GM18951 (cell line): ENCODE measurements at regions of chr17 and their contacts with region 1.

Region 1: DNA sequence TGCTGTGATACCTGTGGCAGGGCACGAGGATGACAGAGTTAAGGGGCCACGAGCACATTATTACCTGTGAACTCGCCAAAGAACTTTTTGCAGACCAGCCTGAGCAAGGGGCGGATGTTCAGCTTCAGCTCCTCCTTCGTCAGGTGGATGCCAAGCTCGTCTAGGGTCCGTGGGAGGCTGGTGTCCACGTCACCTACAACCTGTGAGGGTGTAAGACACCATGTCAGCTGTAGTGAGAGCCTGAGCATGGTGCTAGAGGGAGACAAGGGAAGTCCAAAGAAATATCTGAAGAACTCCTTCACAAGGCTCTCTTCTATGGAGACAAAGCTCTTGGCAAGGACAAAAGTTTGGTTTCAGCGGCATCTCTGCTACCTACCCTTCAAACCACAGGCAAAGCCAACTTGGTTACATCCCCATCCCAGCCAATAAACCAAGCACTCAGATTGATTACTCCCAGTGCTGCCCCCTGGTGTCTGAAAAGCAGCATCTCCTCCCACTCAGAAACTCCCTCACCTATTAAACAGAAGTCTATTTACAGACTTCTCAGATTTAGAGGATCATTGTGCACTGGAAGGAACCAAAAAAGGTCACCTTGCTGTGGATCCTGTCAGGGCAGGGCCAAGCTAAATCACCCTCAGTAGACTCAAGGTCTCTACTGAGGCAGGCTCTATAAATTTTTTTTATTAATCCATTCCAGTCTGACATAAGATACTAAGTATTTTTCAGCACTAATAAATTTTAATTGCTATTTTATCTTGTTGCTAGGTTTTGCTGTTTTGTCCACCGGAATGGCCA is 17.4 kb downstream of the HIGD1B start:
- POLR2A ChIP-seq: no peak

Region 2: DNA sequence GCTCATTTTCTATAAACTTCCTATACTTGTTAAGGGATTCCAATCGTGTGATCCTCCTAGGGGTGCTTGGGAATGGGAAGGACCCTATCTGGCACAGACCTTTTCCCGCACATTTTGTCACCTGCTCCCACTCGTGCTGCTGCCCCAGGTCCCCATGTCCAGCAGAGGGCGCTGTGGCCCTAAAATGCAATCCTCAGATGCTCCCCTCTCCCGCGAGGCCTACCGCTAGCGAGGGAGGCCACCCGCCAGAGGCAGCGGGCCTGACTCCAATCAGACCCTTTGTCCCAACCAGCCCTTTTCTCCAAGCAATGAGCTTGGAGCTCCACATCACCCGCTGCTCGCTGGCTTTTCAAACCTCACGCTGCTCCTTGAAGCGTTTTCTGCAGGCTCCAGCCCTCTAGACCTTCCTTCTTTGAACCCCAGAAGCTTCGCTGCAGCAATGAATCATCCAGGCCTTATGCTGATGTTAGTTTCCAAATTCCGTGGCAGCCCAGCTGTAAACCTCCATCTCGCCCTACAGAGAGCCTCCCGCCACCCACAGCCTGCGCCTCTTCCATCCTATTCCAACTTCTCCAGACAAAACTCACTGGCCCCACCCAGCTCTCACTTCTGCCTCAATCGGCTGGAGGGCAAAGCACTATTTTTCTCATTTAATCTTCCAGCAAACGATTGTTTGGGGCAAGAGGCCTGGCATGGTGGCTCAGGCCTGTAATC is 331.4 kb before region 1 on chr17:
- in situ Hi-C with region 1: no loop called
- POLR2A ChIP-seq: no peak

Region 3: DNA sequence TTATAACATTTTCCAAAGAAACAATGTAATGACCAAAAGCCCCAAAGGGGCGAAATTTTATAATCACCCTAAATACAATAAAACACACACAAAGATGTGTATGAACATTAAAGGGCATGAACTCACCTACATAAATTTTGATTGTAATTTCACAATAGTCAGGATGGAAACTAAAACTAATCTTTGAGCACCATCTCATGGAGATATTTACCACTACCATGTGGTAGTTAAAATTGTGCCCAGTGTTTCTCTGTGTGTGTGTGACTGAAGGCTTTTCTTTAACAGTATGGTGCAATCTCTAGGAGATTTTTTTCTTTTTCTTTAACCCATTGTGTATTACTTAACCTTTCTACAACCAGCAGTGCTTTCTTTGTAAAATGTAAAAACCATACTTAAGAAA is 228.5 kb before region 1 on chr17:
- in situ Hi-C with region 1: no loop called
- POLR2A ChIP-seq: no peak

Region 4: DNA sequence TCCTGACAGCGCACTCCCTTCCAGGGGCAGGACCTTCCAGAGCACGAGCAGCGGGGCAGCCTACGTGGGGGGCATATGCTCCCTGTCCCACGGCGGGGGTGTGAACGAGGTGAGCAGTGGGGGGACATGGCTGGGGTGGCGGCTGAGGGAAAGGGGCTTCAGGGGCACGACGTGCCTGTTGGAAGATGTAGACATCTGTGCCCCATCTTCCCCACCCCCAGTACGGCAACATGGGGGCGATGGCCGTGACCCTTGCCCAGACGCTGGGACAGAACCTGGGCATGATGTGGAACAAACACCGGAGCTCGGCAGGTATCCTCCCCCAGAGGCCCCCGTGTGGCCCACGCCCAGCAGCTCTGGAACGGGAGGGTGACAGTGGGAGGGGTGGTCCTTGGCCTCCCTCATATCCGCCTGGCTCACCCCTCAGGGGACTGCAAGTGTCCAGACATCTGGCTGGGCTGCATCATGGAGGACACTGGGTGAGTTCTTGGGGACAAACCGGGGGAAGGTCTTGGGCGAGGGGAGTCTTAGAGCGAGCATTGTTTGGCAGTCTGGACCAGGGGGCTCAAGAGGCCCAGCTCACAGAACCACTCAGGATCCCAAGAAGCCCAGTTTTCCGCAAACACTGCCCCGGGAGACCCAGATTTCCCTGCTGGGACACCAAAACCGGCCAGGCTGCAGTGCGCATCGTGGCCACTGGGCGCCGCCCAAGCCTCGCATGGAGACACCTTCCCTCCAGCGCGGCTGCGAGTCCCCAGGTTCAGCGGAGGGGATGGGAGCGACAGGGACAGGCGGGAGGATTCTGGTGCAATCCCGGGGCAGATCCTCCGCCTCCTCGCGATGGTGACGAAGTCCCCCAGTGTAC is 90.6 kb before region 1 on chr17:
- in situ Hi-C with region 1: loop called (anchors 5 kb)
- POLR2A ChIP-seq: no peak